A549 (cell line): ENCODE measurements at regions of chr1 and their contacts with region 1.

Region 1: GRCh38 chr1:89762779-89763648 is 57.8 kb upstream of the LRRC8D start:
- DNase-seq: peak; percentile 67 to 73
- ATAC-seq: peak; percentile 98 to 100
- H3K4me3 ChIP-seq: peak overlapping the region; percentile 43
- H3K27ac ChIP-seq: peak overlapping the region; percentile 38 to 39; a peak in 5 of 6 replicates
- H3K4me1 ChIP-seq: 0 out of 3 replicates have a peak, but pooled peaks cover 3% of the 10 kb centered on the region
- CTCF ChIP-seq: peak; percentile 76
- EP300 ChIP-seq: no peak
- POLR2A ChIP-seq: no peak
- RAD21 ChIP-seq: peak; percentile 92 to 93

Region 2: GRCh38 chr1:89605692-89606091 is 157.3 kb before region 1 on chr1:
- CTCF ChIA-PET with region 1: interaction called, 11 read pairs
- POLR2A ChIA-PET with region 1: no interaction called
- DNase-seq: no peak
- ATAC-seq: no peak
- H3K4me3 ChIP-seq: no peak overlapping the region
- H3K27ac ChIP-seq: no peak overlapping the region
- H3K4me1 ChIP-seq: peaks cover 6% of the 10 kb centered on the region; the same call in 1 of the 3 replicates
- CTCF ChIP-seq: no peak
- EP300 ChIP-seq: no peak
- POLR2A ChIP-seq: no peak
- RAD21 ChIP-seq: no peak

Region 3: GRCh38 chr1:89627596-89627962 is 135.4 kb before region 1 on chr1:
- CTCF ChIA-PET with region 1: interaction called, 64 read pairs
- POLR2A ChIA-PET with region 1: interaction called, 5 read pairs
- DNase-seq: no peak
- ATAC-seq: no peak
- H3K4me3 ChIP-seq: no peak overlapping the region
- H3K27ac ChIP-seq: no peak overlapping the region
- H3K4me1 ChIP-seq: peaks cover 5% of the 10 kb centered on the region; the same call in 1 of the 3 replicates
- CTCF ChIP-seq: no peak
- EP300 ChIP-seq: no peak
- POLR2A ChIP-seq: no peak
- RAD21 ChIP-seq: no peak

Region 4: DNA sequence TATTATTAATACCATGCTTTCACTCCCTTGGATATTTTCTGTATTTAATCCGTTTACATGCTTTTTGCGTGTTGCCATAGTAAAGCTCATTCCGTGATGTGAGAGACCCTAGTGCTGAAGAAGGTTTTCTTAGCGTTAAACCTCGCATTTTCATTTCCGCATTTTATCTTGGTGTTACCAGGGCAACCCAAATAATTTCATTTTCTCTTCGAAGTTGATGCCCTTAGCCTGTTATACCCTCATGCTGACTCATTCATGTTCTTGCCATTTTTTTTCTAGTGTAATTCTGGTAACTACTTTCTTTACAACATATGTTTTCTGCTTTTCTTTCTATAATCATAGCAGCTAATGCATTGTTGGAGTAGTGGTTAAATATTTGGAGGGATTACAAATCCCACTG is 92.9 kb before region 1 on chr1:
- CTCF ChIA-PET with region 1: interaction called, 10 read pairs
- POLR2A ChIA-PET with region 1: no interaction called
- DNase-seq: no peak
- ATAC-seq: no peak
- H3K4me3 ChIP-seq: no peak overlapping the region
- H3K27ac ChIP-seq: peak overlapping the region in 1 of 2 experiments; percentile 69; a peak in 1 of 6 replicates
- H3K4me1 ChIP-seq: peaks cover 40% of the 10 kb centered on the region
- CTCF ChIP-seq: no peak
- EP300 ChIP-seq: no peak
- POLR2A ChIP-seq: no peak
- RAD21 ChIP-seq: no peak

Region 5: GRCh38 chr1:89708751-89709375 is 54.2 kb before region 1 on chr1:
- CTCF ChIA-PET with region 1: interaction called, 10 read pairs
- POLR2A ChIA-PET with region 1: no interaction called
- DNase-seq: no peak
- ATAC-seq: no peak
- H3K4me3 ChIP-seq: no peak overlapping the region
- H3K27ac ChIP-seq: no peak overlapping the region
- H3K4me1 ChIP-seq: no peaks in the 10 kb centered on the region
- CTCF ChIP-seq: no peak
- EP300 ChIP-seq: no peak
- POLR2A ChIP-seq: no peak
- RAD21 ChIP-seq: no peak

Region 6: DNA sequence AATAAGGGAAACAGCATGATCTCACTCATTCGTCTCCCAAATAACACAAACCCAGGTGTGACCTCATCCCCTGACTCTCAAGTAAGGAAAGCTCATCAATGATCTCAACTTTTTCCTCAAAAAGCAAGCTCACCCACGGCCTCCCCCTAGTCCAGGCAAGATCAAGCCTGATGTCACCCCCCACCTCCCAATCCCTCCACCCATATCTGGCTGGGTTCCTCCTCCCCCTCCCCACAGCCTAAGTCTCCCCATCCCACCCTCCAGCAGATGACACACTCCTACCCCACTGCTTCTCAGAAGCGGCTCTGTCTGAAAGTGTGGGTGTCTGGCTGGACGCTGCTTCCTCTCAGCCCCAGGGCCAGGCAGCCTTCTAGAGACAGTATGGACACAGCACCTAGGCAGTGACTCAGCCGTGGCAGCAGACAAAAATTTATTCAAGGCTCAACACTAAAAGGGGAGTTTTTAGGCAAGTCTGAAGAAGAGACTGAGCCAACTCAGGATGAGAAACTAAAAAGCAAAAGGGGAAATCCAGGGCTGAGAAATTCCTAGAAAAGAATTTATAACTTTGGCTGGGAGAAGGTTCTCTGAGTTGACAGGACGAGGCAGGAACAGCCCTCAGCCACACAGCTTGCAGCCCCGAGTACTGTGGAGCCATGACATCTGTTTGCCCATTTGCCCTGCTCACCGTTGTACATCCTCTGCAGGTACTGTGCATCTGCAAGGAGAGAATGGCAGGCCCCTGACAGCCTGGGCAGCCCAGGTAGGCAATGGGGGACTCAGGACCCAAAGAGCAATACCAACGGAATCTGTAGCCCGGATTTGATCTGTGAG is 23.8 kb before region 1 on chr1:
- CTCF ChIA-PET with region 1: interaction called, 26 read pairs
- POLR2A ChIA-PET with region 1: no interaction called
- DNase-seq: peak in 1 of 2 experiments; percentile 28
- ATAC-seq: peak; percentile 81 to 92
- H3K4me3 ChIP-seq: no peak overlapping the region
- H3K27ac ChIP-seq: peak overlapping the region; percentile 4 to 41; a peak in 3 of 6 replicates
- H3K4me1 ChIP-seq: peaks cover 14% of the 10 kb centered on the region
- CTCF ChIP-seq: no peak
- EP300 ChIP-seq: no peak
- POLR2A ChIP-seq: no peak
- RAD21 ChIP-seq: no peak